Endothelial cell of umbilical vein (primary cell): ENCODE measurements at regions of chr20 and their contacts with region 1.

Region 1: DNA sequence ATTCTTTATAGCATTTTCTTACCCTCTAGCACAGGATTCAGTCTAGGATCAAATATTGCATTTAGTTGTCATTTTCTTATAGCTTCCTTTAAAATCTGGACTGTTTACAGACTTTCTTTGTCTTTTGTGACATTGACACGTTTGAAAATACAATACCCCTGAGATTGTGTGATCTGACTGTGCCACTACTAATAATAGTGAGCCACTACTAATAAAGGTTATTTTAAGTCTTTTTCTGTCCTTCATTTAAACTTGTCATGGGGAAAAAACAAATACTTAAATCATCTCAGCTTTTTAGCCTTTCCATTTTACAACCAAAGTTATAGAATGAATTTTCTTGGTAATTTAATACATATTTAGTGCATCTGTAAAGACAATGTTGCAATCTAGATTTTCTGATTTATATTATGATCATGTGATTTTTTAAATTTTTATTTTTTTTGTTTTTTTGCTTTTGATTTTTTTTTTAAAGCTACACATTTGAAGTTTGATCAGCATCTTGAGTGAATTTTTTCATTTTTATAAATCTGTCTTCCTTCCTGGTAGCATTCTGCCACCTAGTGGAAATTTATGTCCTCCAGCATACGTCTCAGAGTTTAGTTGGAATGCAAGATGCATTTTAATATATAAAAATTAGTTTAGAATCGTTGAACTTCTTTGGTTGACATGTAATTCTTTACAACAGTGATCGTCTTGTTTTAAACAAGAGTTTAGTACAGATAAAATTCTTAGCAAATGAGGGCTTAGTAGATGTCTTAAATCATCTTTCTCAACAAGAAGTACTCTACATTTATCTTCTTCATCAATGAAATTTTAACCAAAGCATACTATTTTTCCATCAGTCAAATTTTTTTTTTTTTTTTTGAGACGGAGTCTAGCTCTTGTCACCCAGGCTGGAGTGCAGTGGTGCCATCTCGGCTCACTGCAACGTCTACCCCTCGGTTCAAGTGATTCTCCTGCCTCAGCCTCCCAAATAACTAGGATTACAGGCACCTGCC is 119.4 kb downstream of the NCOA3 start:
- DNase-seq: peak; percentile 83
- H3K4me3 ChIP-seq: no peak overlapping the region
- H3K27ac ChIP-seq: no peak overlapping the region
- H3K4me1 ChIP-seq: peaks cover 3% of the 10 kb centered on the region
- H3K27me3 ChIP-seq: no peaks in the 10 kb centered on the region
- CTCF ChIP-seq: peak; percentile 49 to 55
- POLR2A ChIP-seq: no peak

Region 2: DNA sequence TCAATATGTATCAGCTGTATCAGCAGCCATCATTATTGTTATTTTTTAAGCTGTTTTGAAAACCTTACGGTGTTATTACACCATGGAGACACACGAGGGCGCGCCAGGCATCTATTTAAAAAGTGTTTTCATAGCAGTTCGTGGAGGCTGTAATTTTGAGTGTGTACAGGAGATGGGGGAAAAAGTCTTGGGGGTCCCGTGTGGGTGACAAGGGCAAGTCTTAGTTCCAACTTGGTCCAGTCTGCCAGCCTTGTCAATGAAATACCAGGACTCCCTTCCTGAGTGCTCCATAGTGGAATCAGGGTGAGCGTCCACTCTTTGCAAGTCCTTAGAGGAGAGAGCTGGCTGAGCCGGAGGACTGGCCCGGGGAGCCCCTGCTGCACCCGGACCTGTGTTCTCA is 868.4 kb before region 1 on chr20:
- CTCF ChIA-PET with region 1: interaction called, 17 read pairs
- POLR2A ChIA-PET with region 1: no interaction called
- dilution Hi-C with region 1: no loop called
- intact Hi-C with region 1: no loop called
- DNase-seq: peak; percentile 62
- H3K4me3 ChIP-seq: no peak overlapping the region
- H3K27ac ChIP-seq: no peak overlapping the region
- H3K4me1 ChIP-seq: no peaks in the 10 kb centered on the region
- H3K27me3 ChIP-seq: peaks cover 0 to under 1% of the 10 kb centered on the region in 2 experiments
- CTCF ChIP-seq: peak; percentile 57 to 61
- POLR2A ChIP-seq: no peak

Region 3: DNA sequence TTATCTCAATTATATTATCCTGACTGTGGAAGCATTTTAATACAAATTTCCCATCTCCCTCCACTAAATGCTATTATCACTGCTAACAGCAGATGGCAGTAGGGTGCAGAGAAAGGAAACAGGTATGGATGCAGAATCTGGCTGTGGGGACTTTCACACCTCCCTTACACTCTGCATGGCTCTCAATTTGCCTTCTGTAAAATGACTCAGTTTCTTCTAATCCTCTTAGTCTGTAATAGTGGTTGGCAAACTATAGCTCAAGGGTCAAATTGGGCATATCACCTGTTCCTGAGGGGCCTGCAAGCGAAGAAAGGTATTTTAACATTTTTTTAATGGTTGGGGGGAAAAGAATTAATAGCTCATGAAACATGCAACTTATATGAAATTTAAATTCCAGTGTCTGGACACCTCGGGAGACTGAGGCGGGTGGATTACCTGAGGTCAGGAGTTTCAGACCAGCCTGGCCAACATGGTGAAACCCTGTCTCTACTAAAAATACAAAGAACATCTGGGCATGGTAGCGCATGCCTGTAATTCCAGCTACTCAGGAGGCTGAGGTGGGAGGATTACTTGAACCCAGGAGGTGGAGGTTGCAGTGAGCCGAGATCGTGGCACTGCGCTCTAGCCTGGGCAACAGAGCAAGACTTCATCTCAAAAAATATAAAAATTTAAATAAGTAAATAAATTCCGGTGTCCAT is 348.1 kb before region 1 on chr20:
- CTCF ChIA-PET with region 1: interaction called, 73 read pairs
- POLR2A ChIA-PET with region 1: no interaction called
- dilution Hi-C with region 1: no loop called
- intact Hi-C with region 1: loop called (anchors 1 kb)
- DNase-seq: peak; percentile 80
- H3K4me3 ChIP-seq: no peak overlapping the region
- H3K27ac ChIP-seq: peak overlapping the region; percentile 87
- H3K4me1 ChIP-seq: peaks cover 39% of the 10 kb centered on the region
- H3K27me3 ChIP-seq: no peaks in the 10 kb centered on the region
- CTCF ChIP-seq: peak; percentile 60 to 67
- POLR2A ChIP-seq: no peak

Region 4: GRCh38 chr20:47392015-47392720 is 228.9 kb before region 1 on chr20:
- CTCF ChIA-PET with region 1: interaction called, 16 read pairs
- POLR2A ChIA-PET with region 1: no interaction called
- dilution Hi-C with region 1: no loop called
- intact Hi-C with region 1: no loop called
- DNase-seq: peak; percentile 85
- H3K4me3 ChIP-seq: no peak overlapping the region
- H3K27ac ChIP-seq: peak overlapping the region; percentile 91
- H3K4me1 ChIP-seq: peaks cover 12% of the 10 kb centered on the region
- H3K27me3 ChIP-seq: no peaks in the 10 kb centered on the region
- CTCF ChIP-seq: no peak
- POLR2A ChIP-seq: peak; percentile 53

Region 5: DNA sequence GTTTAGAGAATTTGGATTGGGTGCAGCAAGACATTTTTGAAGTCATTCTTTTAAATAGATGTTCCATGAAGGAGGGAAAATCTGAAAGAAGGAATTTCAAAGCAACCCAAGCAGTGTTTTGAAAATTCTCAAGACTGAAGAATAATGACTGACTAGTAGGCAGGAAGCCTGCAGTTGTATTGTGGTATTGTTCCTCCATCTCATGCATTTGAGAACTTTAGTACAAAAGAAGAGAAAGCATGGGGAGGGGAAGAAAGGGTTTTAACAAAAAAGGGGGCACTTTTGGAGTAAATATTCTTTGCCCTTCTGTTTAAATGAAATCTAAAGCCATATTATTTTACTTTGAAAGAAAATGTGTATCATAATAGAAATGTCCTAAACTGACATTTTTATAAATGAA is 112.8 kb before region 1 on chr20:
- CTCF ChIA-PET with region 1: interaction called, 65 read pairs
- POLR2A ChIA-PET with region 1: interaction called, 3 read pairs
- dilution Hi-C with region 1: no loop called
- intact Hi-C with region 1: no loop called
- DNase-seq: peak; percentile 44
- H3K4me3 ChIP-seq: no peak overlapping the region
- H3K27ac ChIP-seq: no peak overlapping the region
- H3K4me1 ChIP-seq: peaks cover 9% of the 10 kb centered on the region
- H3K27me3 ChIP-seq: no peaks in the 10 kb centered on the region
- CTCF ChIP-seq: no peak
- POLR2A ChIP-seq: no peak

Region 6: GRCh38 chr20:47610247-47610944 is 10.7 kb before region 1 on chr20:
- CTCF ChIA-PET with region 1: interaction called, 46 read pairs
- POLR2A ChIA-PET with region 1: no interaction called
- dilution Hi-C with region 1: no loop called
- intact Hi-C with region 1: no loop called
- DNase-seq: peak; percentile 93
- H3K4me3 ChIP-seq: no peak overlapping the region
- H3K27ac ChIP-seq: peak overlapping the region; percentile 95
- H3K4me1 ChIP-seq: peaks cover 37% of the 10 kb centered on the region
- H3K27me3 ChIP-seq: no peaks in the 10 kb centered on the region
- CTCF ChIP-seq: no peak
- POLR2A ChIP-seq: no peak